Activated CD4-positive, alpha-beta T cell treated with anti-CD3 and anti-CD28 coated beads for 36 hours (primary cell): ENCODE measurements at regions of chr7 and their contacts with region 1.

Region 1: GRCh38 chr7:39623018-39623731 is at the start of gene RALA:
- DNase-seq: peak; percentile 95
- ATAC-seq: peak; percentile 95
- H3K4me3 Mint-ChIP-seq: peak within 1 kb of the TSS; percentile 87
- H3K27ac Mint-ChIP-seq: peak within 1 kb of the TSS; percentile 91
- H3K4me1 Mint-ChIP-seq: peaks cover 43% of the 10 kb centered on the region
- H3K27me3 Mint-ChIP-seq: no peaks in the 10 kb centered on the region
- total RNA-seq, gene RALA: 30.7 to 33.7 TPM

Region 2: DNA sequence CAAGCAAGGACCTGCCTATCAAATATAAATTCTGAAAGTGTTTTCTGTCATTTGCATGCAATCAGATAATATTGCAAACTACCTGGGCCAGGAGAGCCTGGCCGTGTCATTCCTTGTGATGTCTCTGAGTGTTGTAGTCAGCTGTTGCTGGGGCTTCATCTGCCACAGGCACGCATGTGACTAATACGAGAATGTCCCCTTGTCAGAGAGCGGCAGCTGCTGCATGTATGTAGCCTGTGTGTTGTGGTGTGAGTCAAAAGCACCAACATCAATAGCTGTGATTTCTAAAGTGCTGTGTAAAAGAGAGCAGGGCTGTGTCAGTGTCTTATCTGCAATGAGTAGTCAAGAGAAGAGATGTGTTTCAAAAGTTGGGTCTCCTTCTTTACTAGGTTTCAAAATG is 490.1 kb before region 1 on chr7:
- CTCF ChIA-PET with region 1: no interaction called
- POLR2A ChIA-PET with region 1: no interaction called
- intact Hi-C with region 1: no loop called
- DNase-seq: peak; percentile 5
- ATAC-seq: no peak
- H3K4me3 Mint-ChIP-seq: no peak overlapping the region
- H3K27ac Mint-ChIP-seq: no peak overlapping the region
- H3K4me1 Mint-ChIP-seq: no peaks in the 10 kb centered on the region
- H3K27me3 Mint-ChIP-seq: peaks cover 19% of the 10 kb centered on the region

Region 3: GRCh38 chr7:39566023-39566921 is 56.9 kb before region 1 on chr7 and contains the start of gene YAE1:
- CTCF ChIA-PET with region 1: no interaction called
- POLR2A ChIA-PET with region 1: no interaction called
- intact Hi-C with region 1: loop called (anchors 1 to 2 kb)
- DNase-seq: peak; percentile 89
- ATAC-seq: peak; percentile 95
- H3K4me3 Mint-ChIP-seq: peak within 1 kb of the TSS; percentile 96
- H3K27ac Mint-ChIP-seq: peak within 1 kb of the TSS; percentile 98
- H3K4me1 Mint-ChIP-seq: peaks cover 14% of the 10 kb centered on the region
- H3K27me3 Mint-ChIP-seq: no peaks in the 10 kb centered on the region
- total RNA-seq, gene YAE1: 9.8 to 13.5 TPM

Region 4: GRCh38 chr7:39589323-39590111 is 33.7 kb before region 1 on chr7:
- CTCF ChIA-PET with region 1: interaction called, 10 read pairs
- POLR2A ChIA-PET with region 1: no interaction called
- intact Hi-C with region 1: loop called (anchors 1 kb)
- DNase-seq: peak; percentile 84
- ATAC-seq: peak; percentile 85
- H3K4me3 Mint-ChIP-seq: peak overlapping the region; percentile 30
- H3K27ac Mint-ChIP-seq: peak overlapping the region; percentile 43
- H3K4me1 Mint-ChIP-seq: peaks cover 36% of the 10 kb centered on the region
- H3K27me3 Mint-ChIP-seq: no peaks in the 10 kb centered on the region

Region 5: GRCh38 chr7:39609113-39609934 is 13.9 kb before region 1 on chr7:
- CTCF ChIA-PET with region 1: interaction called, 12 read pairs
- POLR2A ChIA-PET with region 1: no interaction called
- intact Hi-C with region 1: no loop called
- DNase-seq: peak; percentile 42
- ATAC-seq: peak; percentile 66
- H3K4me3 Mint-ChIP-seq: peak overlapping the region; percentile 41
- H3K27ac Mint-ChIP-seq: peak overlapping the region; percentile 70
- H3K4me1 Mint-ChIP-seq: peaks cover 45% of the 10 kb centered on the region
- H3K27me3 Mint-ChIP-seq: peaks cover 17% of the 10 kb centered on the region

Region 6: GRCh38 chr7:39693812-39694211 is 70.6 kb after region 1 on chr7:
- CTCF ChIA-PET with region 1: no interaction called
- POLR2A ChIA-PET with region 1: interaction called, 3 read pairs
- intact Hi-C with region 1: loop called in 1 of 2 experiments (anchors 2 kb)
- DNase-seq: no peak
- ATAC-seq: peak; percentile 51
- H3K4me3 Mint-ChIP-seq: no peak overlapping the region
- H3K27ac Mint-ChIP-seq: no peak overlapping the region
- H3K4me1 Mint-ChIP-seq: peaks cover 15% of the 10 kb centered on the region
- H3K27me3 Mint-ChIP-seq: no peaks in the 10 kb centered on the region

Region 7: DNA sequence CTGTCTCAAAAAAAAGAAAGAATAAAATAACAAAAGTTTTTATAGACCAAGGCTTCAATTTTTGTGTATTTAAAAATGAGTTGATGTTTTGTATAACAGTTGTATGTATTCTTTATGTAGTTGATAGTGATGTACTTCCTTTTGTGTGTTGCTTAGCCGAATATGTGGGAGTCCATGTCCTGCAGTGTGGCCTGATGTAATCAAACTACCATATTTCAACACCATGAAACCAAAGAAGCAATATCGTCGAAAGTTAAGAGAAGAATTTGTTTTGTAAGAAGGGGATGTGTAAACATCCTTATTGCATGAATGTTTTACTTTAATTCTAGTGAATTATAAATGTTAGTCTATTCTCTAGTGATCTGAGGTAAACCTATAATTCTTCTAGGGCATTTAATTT is 454.7 kb after region 1 on chr7:
- CTCF ChIA-PET with region 1: no interaction called
- POLR2A ChIA-PET with region 1: no interaction called
- intact Hi-C with region 1: no loop called
- DNase-seq: no peak
- ATAC-seq: no peak
- H3K4me3 Mint-ChIP-seq: no peak overlapping the region
- H3K27ac Mint-ChIP-seq: no peak overlapping the region
- H3K4me1 Mint-ChIP-seq: no peaks in the 10 kb centered on the region
- H3K27me3 Mint-ChIP-seq: no peaks in the 10 kb centered on the region

Region 8: GRCh38 chr7:40093631-40094350 is 470.6 kb after region 1 on chr7:
- CTCF ChIA-PET with region 1: no interaction called
- POLR2A ChIA-PET with region 1: no interaction called
- intact Hi-C with region 1: no loop called
- DNase-seq: no peak
- ATAC-seq: no peak
- H3K4me3 Mint-ChIP-seq: no peak overlapping the region
- H3K27ac Mint-ChIP-seq: no peak overlapping the region
- H3K4me1 Mint-ChIP-seq: peaks cover 10% of the 10 kb centered on the region
- H3K27me3 Mint-ChIP-seq: no peaks in the 10 kb centered on the region

Region 9: DNA sequence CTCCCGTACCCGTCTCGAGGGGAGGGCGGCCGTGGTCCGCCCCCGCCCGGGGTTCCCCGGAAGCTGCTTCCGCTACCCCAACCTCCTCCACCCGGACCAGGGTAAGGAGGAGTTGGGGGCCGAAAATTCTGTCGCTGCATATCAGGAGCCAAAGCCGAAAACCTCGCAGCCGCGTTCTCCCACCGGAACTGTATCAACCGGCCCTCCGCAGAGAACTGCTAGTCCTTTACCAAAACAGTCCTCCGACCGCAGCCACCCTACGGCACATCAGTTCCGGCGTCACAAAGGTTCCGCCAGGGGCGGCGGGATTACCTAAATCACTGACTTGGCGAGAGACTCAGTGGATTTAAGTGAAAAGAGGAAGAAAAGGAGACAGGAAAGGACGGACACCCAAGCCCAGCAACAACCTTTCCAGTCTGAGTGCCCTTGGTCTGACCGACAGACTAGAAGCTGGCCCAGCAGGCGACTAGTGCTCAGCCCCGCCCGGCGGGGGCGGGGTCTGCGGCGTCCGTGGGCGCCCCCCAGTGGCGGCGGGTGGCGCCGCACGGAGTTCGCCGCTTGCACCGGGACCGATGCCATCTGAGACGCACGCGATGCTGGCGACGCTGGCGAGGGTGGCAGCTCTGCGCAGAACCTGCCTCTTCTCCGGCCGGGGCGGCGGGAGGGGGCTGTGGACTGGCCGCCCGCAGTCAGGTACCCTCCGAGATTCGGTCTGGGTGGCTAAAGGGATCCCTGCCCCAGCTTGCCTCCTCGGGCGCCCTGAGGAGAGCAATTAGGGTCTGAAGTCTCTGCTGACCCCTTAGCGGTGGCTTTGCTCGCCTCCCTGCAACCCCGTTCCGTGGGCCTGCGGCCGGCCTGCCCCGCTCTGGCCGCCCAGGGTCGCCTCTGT is 511.5 kb after region 1 on chr7 and contains the starts of genes MPLKIP and SUGCT:
- CTCF ChIA-PET with region 1: no interaction called
- POLR2A ChIA-PET with region 1: interaction called, 7 read pairs
- intact Hi-C with region 1: loop called (anchors 1 to 2 kb)
- DNase-seq: peak; percentile 90
- ATAC-seq: peak; percentile 86
- H3K4me3 Mint-ChIP-seq: peak within 1 kb of the TSS; percentile 80
- H3K27ac Mint-ChIP-seq: peak within 1 kb of the TSS; percentile 92
- H3K4me1 Mint-ChIP-seq: peaks cover 28% of the 10 kb centered on the region
- H3K27me3 Mint-ChIP-seq: peaks cover 3% of the 10 kb centered on the region
- total RNA-seq, gene MPLKIP: 28.5 to 35.2 TPM
- total RNA-seq, gene SUGCT: 1.2 to 1.9 TPM

Region 10: DNA sequence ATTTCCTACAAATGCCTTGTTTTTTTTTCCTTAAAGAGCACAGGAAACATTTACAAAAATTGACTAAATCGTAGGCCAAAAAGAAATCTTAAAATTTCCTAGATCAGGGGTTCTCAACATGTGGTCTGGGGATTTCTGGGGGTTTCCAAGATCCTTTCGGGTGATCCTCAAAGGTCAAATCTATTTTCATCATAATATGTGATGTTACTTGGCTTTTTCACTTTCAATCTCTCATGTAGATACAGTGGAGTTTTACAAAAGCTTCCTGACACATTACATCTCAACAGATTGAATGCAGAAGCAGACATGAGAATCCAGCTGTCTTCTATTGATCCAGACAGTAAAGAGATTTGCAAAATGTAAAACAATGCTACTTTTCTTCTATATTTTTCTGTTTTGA is 1582.4 kb after region 1 on chr7:
- CTCF ChIA-PET with region 1: no interaction called
- POLR2A ChIA-PET with region 1: no interaction called
- intact Hi-C with region 1: no loop called
- DNase-seq: no peak
- ATAC-seq: no peak
- H3K4me3 Mint-ChIP-seq: no peak overlapping the region
- H3K27ac Mint-ChIP-seq: no peak overlapping the region
- H3K4me1 Mint-ChIP-seq: no peaks in the 10 kb centered on the region
- H3K27me3 Mint-ChIP-seq: no peaks in the 10 kb centered on the region